B cell (primary cell): ENCODE measurements at regions of chr18 and their contacts with region 1.

Region 1: DNA sequence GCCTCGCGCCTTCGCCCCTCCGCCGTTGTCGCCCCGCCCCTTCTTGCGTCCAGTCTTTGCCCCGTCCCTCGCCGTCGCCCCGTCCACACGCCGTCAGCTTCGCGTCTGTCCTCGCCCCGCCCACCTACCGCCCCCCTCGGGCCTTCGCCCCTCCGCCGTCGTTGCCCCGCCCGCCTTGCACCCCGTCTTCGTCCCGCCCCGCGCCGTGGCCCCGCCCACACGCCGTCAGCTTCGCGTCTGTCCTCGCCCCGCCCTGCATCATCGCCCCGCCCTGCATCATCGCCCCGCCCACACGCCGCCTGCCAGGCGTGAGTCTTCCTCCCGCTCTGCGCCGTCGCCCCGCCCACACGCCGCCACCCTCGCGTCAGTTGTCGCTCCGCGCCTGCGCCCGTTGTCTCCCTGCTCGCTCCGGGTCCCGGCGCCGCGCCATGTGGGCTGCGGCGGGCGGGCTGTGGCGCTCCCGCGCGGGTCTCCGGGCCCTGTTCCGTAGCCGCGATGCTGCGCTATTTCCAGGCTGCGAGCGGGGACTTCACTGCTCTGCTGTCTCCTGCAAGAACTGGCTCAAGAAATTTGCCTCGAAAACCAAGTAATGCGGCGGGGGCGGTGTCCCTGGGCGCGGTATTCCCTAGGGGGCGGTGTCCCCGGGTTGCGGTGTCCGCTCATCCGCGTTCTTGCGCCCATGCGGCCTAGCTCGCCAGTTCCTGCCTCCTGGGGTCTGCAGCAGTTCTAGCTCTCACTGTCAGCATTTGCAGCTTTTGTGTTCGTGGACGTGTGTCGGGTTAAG is at the start of gene RBFA:
- DNase-seq: peak; percentile 99
- ATAC-seq: peak; percentile 72
- H3K4me3 ChIP-seq: peak within 1 kb of the TSS; percentile 62 to 99 (median 85)
- H3K4me3 Mint-ChIP-seq: peak within 1 kb of the TSS; percentile 95
- H3K27ac ChIP-seq: peak within 1 kb of the TSS; percentile 93
- H3K27ac Mint-ChIP-seq: peak within 1 kb of the TSS; percentile 97
- H3K4me1 ChIP-seq: peaks cover 15 to 20% of the 10 kb centered on the region in 2 donors
- H3K4me1 Mint-ChIP-seq: peaks cover 19% of the 10 kb centered on the region
- H3K27me3 ChIP-seq: no peaks in the 10 kb centered on the region
- H3K27me3 Mint-ChIP-seq: no peaks in the 10 kb centered on the region
- CTCF ChIP-seq: no peak
- total RNA-seq, gene RBFA: 24.2 TPM in 2 replicates

Region 2: GRCh38 chr18:79405781-79406575 is 628.3 kb before region 1 on chr18:
- CTCF ChIA-PET with region 1: no interaction called
- POLR2A ChIA-PET with region 1: no interaction called
- intact Hi-C with region 1: loop called (anchors 5 kb)
- DNase-seq: peak; percentile 96
- ATAC-seq: peak; percentile 89
- H3K4me3 ChIP-seq: peak overlapping the region; percentile 19 to 45 (median 35)
- H3K4me3 Mint-ChIP-seq: peak overlapping the region; percentile 79
- H3K27ac ChIP-seq: peak overlapping the region; percentile 91 to 97
- H3K27ac Mint-ChIP-seq: peak overlapping the region; percentile 92
- H3K4me1 ChIP-seq: peaks cover 60 to 63% of the 10 kb centered on the region in 2 donors
- H3K4me1 Mint-ChIP-seq: peaks cover 71% of the 10 kb centered on the region
- H3K27me3 ChIP-seq: no peaks in the 10 kb centered on the region
- H3K27me3 Mint-ChIP-seq: no peaks in the 10 kb centered on the region
- CTCF ChIP-seq: no peak

Region 3: DNA sequence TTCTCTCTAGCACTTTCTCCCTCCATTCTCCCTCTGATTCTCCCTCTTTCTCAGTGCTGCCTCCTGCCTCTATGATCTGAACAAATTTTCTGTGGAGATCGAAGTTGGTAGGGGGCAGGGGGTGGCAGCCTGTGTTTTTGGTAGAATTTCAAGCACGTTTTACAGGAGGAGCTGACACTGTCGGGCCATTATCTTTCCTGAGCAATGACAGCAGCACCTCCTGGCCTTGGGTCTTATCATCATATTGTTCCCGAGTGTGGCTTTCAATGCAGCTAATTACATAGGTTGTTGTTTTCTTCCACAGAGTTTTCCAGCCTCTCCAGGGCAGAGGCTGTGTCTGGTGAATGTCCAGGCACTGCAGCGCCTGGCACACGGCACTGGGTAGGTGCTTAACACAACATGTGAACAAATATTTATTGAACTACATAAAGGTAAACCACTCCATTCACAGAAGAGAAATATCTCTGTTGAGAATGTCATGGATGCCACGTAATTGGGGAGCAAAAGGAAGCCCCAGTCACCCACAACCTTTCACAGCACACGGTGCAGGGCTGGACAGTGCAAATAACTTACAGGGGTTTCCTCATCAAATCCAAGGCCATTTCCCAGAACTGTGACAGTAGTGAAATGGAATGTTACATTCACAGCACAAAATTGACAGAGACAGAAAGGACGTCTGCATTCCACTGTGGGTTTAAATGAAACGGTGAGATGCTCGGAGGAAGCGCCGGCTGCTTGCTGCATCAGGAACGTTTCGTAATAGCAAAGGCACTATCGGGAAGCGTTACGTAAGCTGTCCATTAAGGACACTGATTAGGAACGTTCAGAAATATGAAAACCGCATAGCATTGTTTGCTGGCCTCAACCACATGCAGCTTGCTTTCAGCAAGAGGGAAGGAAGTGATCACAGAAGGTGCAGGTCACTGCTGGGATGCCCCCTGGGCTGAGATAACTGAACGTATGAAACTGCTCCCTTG is 243.0 kb before region 1 on chr18:
- CTCF ChIA-PET with region 1: no interaction called
- POLR2A ChIA-PET with region 1: no interaction called
- intact Hi-C with region 1: loop called (anchors 10 kb)
- DNase-seq: peak; percentile 40
- ATAC-seq: no peak
- H3K4me3 ChIP-seq: peak overlapping the region in 2 of 5 experiments; percentile 5 to 12
- H3K4me3 Mint-ChIP-seq: peak overlapping the region; percentile 44
- H3K27ac ChIP-seq: no peak overlapping the region
- H3K27ac Mint-ChIP-seq: no peak overlapping the region
- H3K4me1 ChIP-seq: peaks cover 29 to 38% of the 10 kb centered on the region in 2 donors
- H3K4me1 Mint-ChIP-seq: peaks cover 28% of the 10 kb centered on the region
- H3K27me3 ChIP-seq: peaks cover 0 to 60% (median 24%) of the 10 kb centered on the region in 4 experiments
- H3K27me3 Mint-ChIP-seq: peaks cover 61% of the 10 kb centered on the region
- CTCF ChIP-seq: no peak

Region 4: GRCh38 chr18:79898916-79899608 is 135.2 kb before region 1 on chr18:
- CTCF ChIA-PET with region 1: no interaction called
- POLR2A ChIA-PET with region 1: no interaction called
- intact Hi-C with region 1: no loop called
- DNase-seq: peak; percentile 25
- ATAC-seq: no peak
- H3K4me3 ChIP-seq: no peak overlapping the region
- H3K4me3 Mint-ChIP-seq: no peak overlapping the region
- H3K27ac ChIP-seq: no peak overlapping the region
- H3K27ac Mint-ChIP-seq: no peak overlapping the region
- H3K4me1 ChIP-seq: no peaks in the 10 kb centered on the region
- H3K4me1 Mint-ChIP-seq: no peaks in the 10 kb centered on the region
- H3K27me3 ChIP-seq: no peaks in the 10 kb centered on the region
- H3K27me3 Mint-ChIP-seq: no peaks in the 10 kb centered on the region
- CTCF ChIP-seq: no peak

Region 5: GRCh38 chr18:79988451-79989194 is 45.6 kb before region 1 on chr18 and contains the start of gene TXNL4A:
- CTCF ChIA-PET with region 1: no interaction called
- POLR2A ChIA-PET with region 1: interaction called, 8 read pairs
- intact Hi-C with region 1: loop called (anchors 1 kb)
- DNase-seq: peak; percentile 92
- ATAC-seq: peak; percentile 92
- H3K4me3 ChIP-seq: peak within 1 kb of the TSS; percentile 75 to 91 (median 89)
- H3K4me3 Mint-ChIP-seq: peak within 1 kb of the TSS; percentile 89
- H3K27ac ChIP-seq: peak within 1 kb of the TSS; percentile 87 to 94
- H3K27ac Mint-ChIP-seq: peak within 1 kb of the TSS; percentile 94
- H3K4me1 ChIP-seq: peaks cover 15 to 23% of the 10 kb centered on the region in 2 donors
- H3K4me1 Mint-ChIP-seq: peaks cover 32% of the 10 kb centered on the region
- H3K27me3 ChIP-seq: no peaks in the 10 kb centered on the region
- H3K27me3 Mint-ChIP-seq: no peaks in the 10 kb centered on the region
- CTCF ChIP-seq: no peak
- total RNA-seq, gene TXNL4A: 63.9 and 67.8 TPM in 2 replicates

Region 6: DNA sequence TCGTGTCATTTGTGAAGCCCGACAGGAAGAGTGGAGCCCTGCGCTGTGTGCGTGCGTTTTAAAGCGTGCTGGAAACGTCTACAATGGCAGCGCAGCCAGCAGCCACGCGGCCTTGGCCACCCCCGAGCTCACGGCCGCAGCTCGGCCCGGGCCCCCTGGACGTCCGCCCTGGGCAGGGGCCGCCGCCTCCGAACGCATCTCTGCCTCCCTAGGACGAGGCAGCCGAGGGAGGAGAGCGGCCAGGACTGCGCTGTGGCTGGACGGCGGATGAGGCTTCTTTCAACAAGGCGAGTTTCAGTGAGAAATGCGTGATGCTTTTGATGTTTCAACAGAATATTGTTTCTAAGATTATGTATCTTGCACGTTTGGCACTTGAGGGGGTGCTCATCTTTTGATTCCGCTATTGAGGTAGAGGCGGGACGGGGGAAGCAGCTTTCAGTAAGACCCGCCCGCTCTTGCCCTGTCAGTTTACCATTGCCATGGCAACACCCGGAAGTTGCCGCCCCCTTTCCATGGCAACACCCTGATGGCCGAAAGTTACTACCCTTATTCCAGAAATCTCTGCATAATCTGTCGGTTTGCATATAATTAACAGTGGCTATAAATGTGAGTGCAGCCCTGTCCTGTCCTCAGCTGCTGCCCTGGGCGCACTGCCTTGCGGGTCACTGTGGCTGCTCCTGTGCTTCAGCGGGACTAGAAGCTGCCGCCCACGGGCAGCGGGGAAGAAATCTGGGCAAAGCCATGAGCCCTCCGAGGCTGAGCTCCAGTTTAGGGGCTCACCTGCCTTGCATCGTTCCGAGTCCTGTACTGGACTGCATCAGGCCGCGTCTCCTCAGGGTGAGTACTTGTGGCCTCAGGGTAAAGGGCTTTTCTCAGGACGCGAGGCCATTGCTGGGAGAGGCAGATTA is 113.4 kb after region 1 on chr18:
- CTCF ChIA-PET with region 1: no interaction called
- POLR2A ChIA-PET with region 1: no interaction called
- intact Hi-C with region 1: loop called (anchors 2 kb)
- DNase-seq: peak; percentile 86
- ATAC-seq: peak; percentile 86
- H3K4me3 ChIP-seq: peak overlapping the region; percentile 55 to 76 (median 66)
- H3K4me3 Mint-ChIP-seq: peak overlapping the region; percentile 94
- H3K27ac ChIP-seq: no peak overlapping the region
- H3K27ac Mint-ChIP-seq: peak overlapping the region; percentile 92
- H3K4me1 ChIP-seq: peaks cover 10 to 11% of the 10 kb centered on the region in 2 donors
- H3K4me1 Mint-ChIP-seq: peaks cover 20% of the 10 kb centered on the region
- H3K27me3 ChIP-seq: no peaks in the 10 kb centered on the region
- H3K27me3 Mint-ChIP-seq: no peaks in the 10 kb centered on the region
- CTCF ChIP-seq: no peak